ENCODE measurements at regions of chr2 and their contacts with region 1.

Region 1: GRCh38 chr2:112481050-112481527 is 867 bp upstream of the TTL start:
- DNase-seq: peak; percentile 87
- H3K4me3 ChIP-seq: peak overlapping the region; percentile 84
- H3K27ac ChIP-seq: peak overlapping the region; percentile 89
- H3K4me1 ChIP-seq: peaks cover 19% of the 10 kb centered on the region
- CTCF ChIP-seq: peak; percentile 81

Region 2: GRCh38 chr2:111883661-111884591 is 597.2 kb before region 1 on chr2 and contains the start of gene ANAPC1:
- CTCF ChIA-PET with region 1: no interaction called
- POLR2A ChIA-PET with region 1: no interaction called
- intact Hi-C with region 1: loop called (anchors 5 kb)
- DNase-seq: peak; percentile 92
- H3K4me3 ChIP-seq: peak within 1 kb of the TSS; percentile 88
- H3K27ac ChIP-seq: peak within 1 kb of the TSS; percentile 87
- H3K4me1 ChIP-seq: peaks cover 14% of the 10 kb centered on the region
- CTCF ChIP-seq: no peak
- total RNA-seq, gene ANAPC1: 103 and 151 TPM in 2 replicates

Region 3: DNA sequence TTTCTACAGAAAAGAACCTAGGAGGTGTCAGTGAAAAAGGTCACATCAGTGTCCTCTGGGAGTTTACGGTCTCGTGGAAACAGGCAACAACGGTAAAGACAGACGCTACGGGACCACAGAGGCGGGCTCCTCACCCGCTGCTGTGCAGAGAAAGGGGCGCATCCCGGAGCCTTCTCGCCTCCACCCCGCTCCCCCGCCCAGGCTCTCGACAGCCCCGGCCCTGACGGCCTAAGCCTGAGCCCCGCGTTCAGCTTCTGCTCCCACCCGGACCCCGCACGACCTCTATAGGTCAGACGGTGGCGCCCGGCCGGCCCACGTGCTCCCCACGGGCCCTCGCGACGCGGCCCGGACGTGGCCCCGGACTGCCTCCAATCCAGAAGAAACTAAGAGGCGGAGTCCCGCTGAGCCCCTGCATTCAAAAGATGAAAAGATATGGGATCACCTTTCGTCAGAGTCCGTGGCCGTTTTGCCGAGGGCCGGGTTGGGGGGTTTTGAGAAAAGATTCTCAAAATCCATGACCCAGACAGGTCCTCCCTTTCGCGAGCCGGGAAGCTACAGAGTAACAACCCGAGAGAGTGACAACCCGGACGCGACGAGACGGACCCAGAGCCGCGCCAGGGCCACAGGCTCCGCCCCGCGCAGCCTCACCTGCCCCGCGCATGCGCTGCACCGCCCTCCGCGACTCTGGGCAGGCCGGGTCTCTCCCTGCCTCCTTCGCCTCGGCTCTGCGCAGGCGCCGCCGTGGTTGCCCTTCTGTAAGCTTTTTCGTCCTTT is 226.4 kb before region 1 on chr2 and contains the start of gene ZC3H8:
- CTCF ChIA-PET with region 1: no interaction called
- POLR2A ChIA-PET with region 1: no interaction called
- intact Hi-C with region 1: loop called (anchors 5 kb)
- DNase-seq: peak; percentile 93
- H3K4me3 ChIP-seq: peak within 1 kb of the TSS; percentile 83
- H3K27ac ChIP-seq: peak within 1 kb of the TSS; percentile 70
- H3K4me1 ChIP-seq: peaks cover 21% of the 10 kb centered on the region
- CTCF ChIP-seq: peak; percentile 45
- total RNA-seq, gene ZC3H8: 12.3 and 15.0 TPM in 2 replicates

Region 4: GRCh38 chr2:112542123-112542983 is 61.3 kb after region 1 on chr2 and contains the start of gene POLR1B:
- CTCF ChIA-PET with region 1: no interaction called
- POLR2A ChIA-PET with region 1: interaction called, 4 read pairs
- intact Hi-C with region 1: loop called (anchors 1 kb)
- DNase-seq: peak; percentile 85
- H3K4me3 ChIP-seq: peak within 1 kb of the TSS; percentile 91
- H3K27ac ChIP-seq: peak within 1 kb of the TSS; percentile 83
- H3K4me1 ChIP-seq: peaks cover 23% of the 10 kb centered on the region
- CTCF ChIP-seq: no peak
- total RNA-seq, gene POLR1B: 28.0 and 30.5 TPM in 2 replicates

Region 5: DNA sequence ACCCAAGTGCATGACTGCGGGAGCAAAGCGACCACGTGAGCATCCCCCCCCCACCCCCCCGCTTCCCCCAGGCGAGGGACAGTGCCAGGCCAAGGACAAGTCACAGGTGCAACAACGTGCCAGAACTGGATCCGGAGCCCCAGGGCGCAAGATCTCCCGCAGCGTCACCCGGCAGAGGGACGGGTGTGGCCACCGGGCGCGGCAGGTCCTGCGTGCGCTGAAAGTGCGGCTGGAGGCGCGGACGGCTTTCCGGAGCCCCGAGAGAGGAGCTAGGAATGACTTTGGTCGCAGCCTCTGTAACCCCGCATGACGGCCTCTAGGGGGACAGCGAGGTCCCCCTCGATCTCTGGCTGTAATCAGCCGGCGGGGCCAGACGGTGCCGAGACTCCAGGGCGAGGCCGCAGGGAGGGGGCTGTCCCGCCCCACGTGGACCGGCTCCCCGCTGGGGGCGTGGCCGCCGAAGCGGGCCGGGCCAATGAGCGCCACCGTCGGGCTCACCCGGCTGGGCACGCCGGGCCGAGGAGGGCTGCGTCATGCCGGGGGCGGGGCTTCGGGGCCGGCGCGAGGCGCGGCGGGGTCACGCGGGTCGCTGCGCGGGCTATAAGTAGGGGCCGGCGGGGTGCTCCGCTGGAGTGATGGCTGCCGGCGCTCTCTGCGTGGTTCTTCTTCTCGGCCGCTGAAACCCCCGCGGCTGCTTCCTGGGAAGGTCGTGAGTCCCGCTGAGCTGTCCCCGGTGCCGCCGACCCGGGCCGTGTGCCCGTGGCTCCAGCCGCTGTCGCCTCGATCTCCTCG is 164.4 kb after region 1 on chr2 and contains the start of gene SLC20A1:
- CTCF ChIA-PET with region 1: no interaction called
- POLR2A ChIA-PET with region 1: no interaction called
- intact Hi-C with region 1: loop called (anchors 1 kb)
- DNase-seq: peak; percentile 95
- H3K4me3 ChIP-seq: peak within 1 kb of the TSS; percentile 80
- H3K27ac ChIP-seq: peak within 1 kb of the TSS; percentile 75
- H3K4me1 ChIP-seq: peaks cover 40% of the 10 kb centered on the region
- CTCF ChIP-seq: peak; percentile 60
- total RNA-seq, gene SLC20A1: 59.7 and 64.8 TPM in 2 replicates

Region 6: DNA sequence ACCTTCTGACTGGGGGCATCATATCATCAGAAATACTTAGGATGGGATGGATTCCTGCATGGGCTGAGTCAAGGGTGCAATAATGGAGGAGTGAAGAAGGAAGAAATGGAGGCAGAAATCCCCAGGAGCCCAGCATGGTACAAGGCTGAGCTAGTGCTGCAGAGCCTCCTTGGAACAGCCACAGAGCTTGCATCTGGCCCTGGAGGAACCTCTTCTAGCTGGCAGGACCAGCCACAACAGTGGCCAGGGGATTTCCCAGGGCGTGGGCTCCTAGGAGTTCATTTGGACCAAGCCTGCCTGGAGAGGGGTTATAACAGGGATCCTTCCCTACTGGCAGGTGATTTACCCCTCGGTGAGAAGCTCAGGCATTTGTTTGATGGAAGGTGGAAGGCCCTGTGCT is 425.2 kb after region 1 on chr2:
- CTCF ChIA-PET with region 1: no interaction called
- POLR2A ChIA-PET with region 1: no interaction called
- intact Hi-C with region 1: no loop called
- DNase-seq: no peak
- H3K4me3 ChIP-seq: no peak overlapping the region
- H3K27ac ChIP-seq: no peak overlapping the region
- H3K4me1 ChIP-seq: no peaks in the 10 kb centered on the region
- CTCF ChIP-seq: no peak

Measured in OCI-LY7 (cell line).